GM10248 (cell line): ENCODE measurements at regions of chr17 and their contacts with region 1.

Region 1: GRCh38 chr17:64544742-64545141 is 38.0 kb downstream of the CEP95 start:
- DNase-seq: no peak
- CTCF ChIP-seq: no peak

Region 2: GRCh38 chr17:64385187-64386083 is 159.3 kb before region 1 on chr17:
- CTCF ChIA-PET with region 1: no interaction called
- POLR2A ChIA-PET with region 1: no interaction called
- DNase-seq: peak; percentile 43
- CTCF ChIP-seq: no peak

Region 3: DNA sequence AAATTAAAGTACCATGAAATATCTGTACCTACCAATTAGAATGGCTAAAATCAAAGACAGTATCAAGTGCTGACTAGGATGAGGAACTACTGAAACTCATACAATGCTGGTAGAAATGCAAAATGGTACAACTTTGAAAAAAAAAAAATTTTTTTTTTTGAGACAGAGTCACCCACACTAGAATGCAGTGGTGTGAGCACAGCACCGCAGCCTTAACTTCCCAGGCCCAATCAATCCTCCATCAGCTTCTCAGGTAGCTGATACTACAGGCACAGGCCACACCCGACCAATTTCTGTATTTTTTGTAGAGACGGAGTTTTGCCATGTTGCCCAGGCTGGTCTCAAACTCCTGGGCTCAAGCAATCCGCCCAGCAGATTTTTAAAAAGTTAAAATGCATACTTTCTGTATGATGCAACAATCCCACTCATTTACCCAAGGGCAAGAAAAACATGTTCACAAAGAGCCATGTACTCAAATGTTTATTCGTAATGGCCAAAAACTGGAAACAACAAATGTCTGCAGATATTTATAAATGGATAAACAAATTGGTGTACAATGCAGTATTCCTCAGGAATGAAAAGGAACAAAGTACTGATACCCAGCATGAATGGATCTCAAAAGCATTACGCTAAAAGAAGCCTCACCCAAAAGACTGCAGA is 108.7 kb after region 1 on chr17:
- CTCF ChIA-PET with region 1: interaction called, 10 read pairs
- POLR2A ChIA-PET with region 1: no interaction called
- DNase-seq: no peak
- CTCF ChIP-seq: no peak

Region 4: DNA sequence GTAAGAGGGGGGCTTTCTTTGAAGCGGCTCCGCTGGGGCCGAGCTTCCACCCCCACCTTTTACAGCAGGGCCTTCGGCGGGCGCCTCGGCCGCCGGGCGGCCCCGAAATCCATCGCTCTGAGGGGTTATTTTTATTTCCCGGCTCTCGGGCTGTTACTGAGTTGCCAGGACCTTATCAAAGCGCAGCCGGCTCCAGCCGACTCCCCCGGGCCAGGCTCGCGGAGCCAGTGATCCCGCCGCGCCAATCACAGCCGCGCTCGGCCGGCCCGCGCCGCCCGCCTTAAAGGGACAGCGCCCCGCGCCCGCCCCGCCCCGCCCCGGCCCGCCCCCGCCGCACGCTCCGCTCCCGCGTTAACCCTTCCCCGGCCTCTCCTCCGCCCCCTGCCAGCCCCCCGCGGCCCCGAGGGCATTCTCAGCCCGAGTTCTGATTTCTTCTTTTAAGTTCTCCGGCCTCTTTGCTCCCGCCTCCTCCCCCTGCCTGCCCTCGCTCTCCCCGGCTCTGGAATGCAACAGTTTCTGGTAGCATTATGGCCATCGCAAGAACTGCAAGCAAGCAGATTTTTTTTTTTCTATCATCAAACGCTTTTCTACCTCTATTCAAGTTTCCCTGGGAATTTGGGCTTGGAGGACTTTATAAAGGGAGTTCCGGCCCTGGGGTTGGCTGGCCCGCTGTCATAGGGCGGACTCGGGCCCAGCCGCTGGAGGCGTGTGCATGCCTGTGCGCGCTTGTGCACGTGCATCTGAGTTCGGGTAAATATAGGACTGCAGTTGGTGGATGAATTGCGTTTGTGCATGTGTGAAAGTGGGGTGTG is 1016.9 kb after region 1 on chr17 and contains the start of gene AXIN2:
- CTCF ChIA-PET with region 1: no interaction called
- POLR2A ChIA-PET with region 1: no interaction called
- DNase-seq: peak; percentile 90
- CTCF ChIP-seq: no peak